Naive thymus-derived CD4-positive, alpha-beta T cell (primary cell): ENCODE measurements at regions of chr9 and their contacts with region 1.

Region 1: GRCh38 chr9:31745468-31745867 is 639.0 kb upstream of the ACO1 start:
- DNase-seq: no peak
- ATAC-seq: no peak
- H3K4me3 ChIP-seq: no peak overlapping the region
- H3K4me3 Mint-ChIP-seq: no peak overlapping the region
- H3K27ac ChIP-seq: no peak overlapping the region
- H3K27ac Mint-ChIP-seq: no peak overlapping the region
- H3K4me1 ChIP-seq: no peaks in the 10 kb centered on the region
- H3K4me1 Mint-ChIP-seq: no peaks in the 10 kb centered on the region
- H3K27me3 ChIP-seq: no peaks in the 10 kb centered on the region
- H3K27me3 Mint-ChIP-seq: peaks cover 0 to 4% (median 0%) of the 10 kb centered on the region in 5 donors

Region 2: DNA sequence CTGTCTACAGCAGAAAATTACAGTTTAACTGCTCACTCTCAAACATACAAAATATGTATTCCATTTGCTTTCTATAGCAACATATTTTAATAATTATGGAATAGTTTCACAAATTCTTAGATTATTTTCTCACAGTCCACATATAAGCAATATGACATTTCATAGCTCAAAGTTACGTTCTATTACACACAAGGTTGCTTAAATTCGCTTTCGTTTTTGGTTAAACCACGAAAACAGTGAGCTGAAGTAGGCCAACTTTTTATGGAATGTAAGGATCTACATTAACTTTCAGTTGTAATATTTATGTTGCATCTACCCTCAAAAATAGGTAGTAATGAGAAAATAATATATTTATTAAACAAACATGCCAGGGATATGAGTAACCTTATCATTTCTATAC is 327.0 kb before region 1 on chr9:
- CTCF ChIA-PET with region 1: no interaction called
- POLR2A ChIA-PET with region 1: no interaction called
- intact Hi-C with region 1: loop called in 1 of 2 experiments (anchors 10 kb)
- DNase-seq: no peak
- ATAC-seq: no peak
- H3K4me3 ChIP-seq: no peak overlapping the region
- H3K4me3 Mint-ChIP-seq: no peak overlapping the region
- H3K27ac ChIP-seq: no peak overlapping the region
- H3K27ac Mint-ChIP-seq: no peak overlapping the region
- H3K4me1 ChIP-seq: no peaks in the 10 kb centered on the region
- H3K4me1 Mint-ChIP-seq: peaks cover 0 to 10% (median 5%) of the 10 kb centered on the region in 7 donors
- H3K27me3 ChIP-seq: no peaks in the 10 kb centered on the region
- H3K27me3 Mint-ChIP-seq: no peaks in the 10 kb centered on the region

Region 3: DNA sequence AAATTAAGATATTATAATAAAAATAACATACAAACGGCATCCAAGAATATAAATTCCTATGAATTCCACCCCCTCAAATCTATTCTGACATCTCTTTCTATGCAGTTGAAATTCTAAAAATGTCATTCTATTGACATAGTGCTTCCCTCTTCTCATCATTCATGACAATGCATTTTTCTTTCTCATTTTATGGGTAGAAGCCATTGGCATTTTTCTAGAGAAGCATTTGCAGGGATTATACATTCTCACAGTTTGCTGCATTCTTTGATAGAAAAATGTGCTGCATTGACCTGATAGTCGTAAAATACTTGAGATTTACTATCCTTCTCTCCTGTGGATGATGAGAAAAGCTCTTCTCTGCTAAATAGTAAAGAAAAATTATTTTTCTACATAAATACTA is 122.0 kb before region 1 on chr9:
- CTCF ChIA-PET with region 1: no interaction called
- POLR2A ChIA-PET with region 1: no interaction called
- intact Hi-C with region 1: no loop called
- DNase-seq: no peak
- ATAC-seq: no peak
- H3K4me3 ChIP-seq: no peak overlapping the region
- H3K4me3 Mint-ChIP-seq: no peak overlapping the region
- H3K27ac ChIP-seq: no peak overlapping the region
- H3K27ac Mint-ChIP-seq: no peak overlapping the region
- H3K4me1 ChIP-seq: no peaks in the 10 kb centered on the region
- H3K4me1 Mint-ChIP-seq: peaks cover 0 to 7% (median 0%) of the 10 kb centered on the region in 7 donors
- H3K27me3 ChIP-seq: no peaks in the 10 kb centered on the region
- H3K27me3 Mint-ChIP-seq: no peaks in the 10 kb centered on the region

Region 4: GRCh38 chr9:31776471-31776870 is 31.0 kb after region 1 on chr9:
- CTCF ChIA-PET with region 1: no interaction called
- POLR2A ChIA-PET with region 1: no interaction called
- intact Hi-C with region 1: no loop called
- DNase-seq: no peak
- ATAC-seq: no peak
- H3K4me3 ChIP-seq: no peak overlapping the region
- H3K4me3 Mint-ChIP-seq: no peak overlapping the region
- H3K27ac ChIP-seq: no peak overlapping the region
- H3K27ac Mint-ChIP-seq: no peak overlapping the region
- H3K4me1 ChIP-seq: no peaks in the 10 kb centered on the region
- H3K4me1 Mint-ChIP-seq: peaks cover 0 to 4% (median 0%) of the 10 kb centered on the region in 7 donors
- H3K27me3 ChIP-seq: no peaks in the 10 kb centered on the region
- H3K27me3 Mint-ChIP-seq: peaks cover 0 to 12% (median 4%) of the 10 kb centered on the region in 5 donors